WTC11 (cell line): ENCODE measurements at regions of chr20 and their contacts with region 1.

Region 1: GRCh38 chr20:13341781-13342277 is 120.8 kb downstream of the ISM1 start:
- DNase-seq: no peak
- ATAC-seq: no peak
- H3K4me3 Mint-ChIP-seq: no peak overlapping the region
- H3K27ac Mint-ChIP-seq: no peak overlapping the region
- H3K4me1 Mint-ChIP-seq: peaks cover 27% of the 10 kb centered on the region
- H3K27me3 Mint-ChIP-seq: no peaks in the 10 kb centered on the region
- CTCF ChIP-seq: no peak

Region 2: GRCh38 chr20:13325033-13325432 is 16.8 kb before region 1 on chr20:
- CTCF ChIA-PET with region 1: interaction called, 13 read pairs
- POLR2A ChIA-PET with region 1: no interaction called
- DNase-seq: peak; percentile 78
- ATAC-seq: peak; percentile 99
- H3K4me3 Mint-ChIP-seq: no peak overlapping the region
- H3K27ac Mint-ChIP-seq: no peak overlapping the region
- H3K4me1 Mint-ChIP-seq: peaks cover 29% of the 10 kb centered on the region
- H3K27me3 Mint-ChIP-seq: no peaks in the 10 kb centered on the region; the same call in 1 of the 2 replicates
- CTCF ChIP-seq: peak; percentile 35; the same call in 1 of the 2 replicates